Left lung (tissue), 14 donors: ENCODE measurements at regions of chr17 and their contacts with region 1.

Region 1: DNA sequence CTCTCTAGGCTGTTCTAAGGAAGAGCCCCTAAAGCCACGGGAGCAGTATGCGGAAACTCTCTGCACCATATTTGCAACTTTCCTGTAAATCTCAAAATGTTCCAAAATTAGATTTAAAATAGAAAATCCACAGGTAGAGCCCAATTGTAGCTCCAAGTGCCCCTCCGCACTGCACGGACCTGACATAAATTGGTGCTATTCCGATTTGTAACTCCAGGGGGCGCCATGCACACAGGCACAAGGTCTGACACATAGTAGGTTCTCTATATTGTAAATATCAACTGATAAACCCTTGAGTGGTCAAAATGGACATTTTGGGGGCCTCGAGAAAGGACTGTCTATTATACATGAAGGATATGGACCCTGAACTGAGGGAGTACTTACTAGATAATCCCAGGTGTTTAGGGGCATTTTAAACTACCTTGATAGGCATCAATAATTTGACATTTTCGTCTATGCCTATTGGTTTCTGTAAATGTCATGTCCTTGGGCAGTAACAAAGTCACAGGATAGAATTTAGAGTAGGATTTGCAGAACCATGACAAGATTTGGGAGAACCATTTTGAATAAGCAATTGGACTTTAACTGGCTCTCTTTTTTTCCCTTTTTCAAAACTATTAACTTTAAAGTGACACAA is 36.6 kb upstream of the TMEM132E start:
- DNase-seq: no peak
- ATAC-seq: peak; percentile 69
- H3K4me3 ChIP-seq: no peak overlapping the region
- H3K27ac ChIP-seq: no peak overlapping the region
- H3K4me1 ChIP-seq: no peaks in the 10 kb centered on the region
- H3K27me3 ChIP-seq: peaks cover 4 to 50% of the 10 kb centered on the region in 2 donors
- CTCF ChIP-seq: peak; percentile 70 to 76

Region 2: DNA sequence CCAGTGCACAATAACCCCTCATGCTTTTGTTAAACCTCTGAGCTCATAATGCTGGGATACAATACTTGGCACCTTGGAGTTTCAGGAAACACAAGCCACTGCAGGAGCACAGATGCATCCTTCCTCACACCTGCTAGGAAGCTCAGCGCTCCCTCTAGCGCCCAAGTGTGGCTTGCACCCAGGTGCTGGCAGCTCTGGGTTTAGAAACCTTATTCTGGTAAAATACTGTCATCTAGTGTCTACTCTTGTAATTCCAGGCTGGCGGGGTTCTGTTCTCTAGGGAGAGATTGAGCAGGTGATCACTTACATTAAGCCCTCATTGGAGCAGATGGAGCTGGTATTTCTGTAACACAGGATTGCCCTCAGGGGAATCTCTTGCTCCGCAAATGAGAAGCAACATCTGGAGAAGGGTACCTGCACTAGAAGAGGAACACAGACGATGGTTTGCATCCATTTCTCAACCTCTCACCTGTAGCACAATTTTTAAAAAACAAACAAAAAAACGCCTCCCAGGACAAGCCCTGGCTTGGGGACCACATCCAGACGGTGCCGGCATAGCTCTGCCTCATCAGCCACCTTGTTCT is 181.2 kb before region 1 on chr17:
- intact Hi-C with region 1: no loop called
- DNase-seq: peak; percentile 78 to 93 (median 92)
- ATAC-seq: peak; percentile 99
- H3K4me3 ChIP-seq: no peak overlapping the region
- H3K27ac ChIP-seq: no peak overlapping the region
- H3K4me1 ChIP-seq: peaks cover 0 to 6% of the 10 kb centered on the region in 2 donors
- H3K27me3 ChIP-seq: no peaks in the 10 kb centered on the region
- CTCF ChIP-seq: peak; percentile 97 to 99

Region 3: GRCh38 chr17:35103271-35103670 is 560.5 kb after region 1 on chr17:
- intact Hi-C with region 1: loop called in 1 of 2 experiments (anchors 10 kb)
- DNase-seq: no peak
- ATAC-seq: no peak
- H3K4me3 ChIP-seq: no peak overlapping the region
- H3K27ac ChIP-seq: no peak overlapping the region
- H3K4me1 ChIP-seq: peaks cover 0 to 6% of the 10 kb centered on the region in 2 donors
- H3K27me3 ChIP-seq: no peaks in the 10 kb centered on the region
- CTCF ChIP-seq: no peak